Calu3 (cell line): ENCODE measurements at regions of chr7 and their contacts with region 1.

Region 1: GRCh38 chr7:118918556-118918955 is 694.1 kb downstream of the ANKRD7 start:
- DNase-seq: no peak
- H3K4me3 Mint-ChIP-seq: no peak overlapping the region
- H3K27ac Mint-ChIP-seq: no peak overlapping the region
- H3K4me1 Mint-ChIP-seq: no peaks in the 10 kb centered on the region
- H3K27me3 Mint-ChIP-seq: no peaks in the 10 kb centered on the region
- CTCF ChIP-seq: peak; percentile 26

Region 2: DNA sequence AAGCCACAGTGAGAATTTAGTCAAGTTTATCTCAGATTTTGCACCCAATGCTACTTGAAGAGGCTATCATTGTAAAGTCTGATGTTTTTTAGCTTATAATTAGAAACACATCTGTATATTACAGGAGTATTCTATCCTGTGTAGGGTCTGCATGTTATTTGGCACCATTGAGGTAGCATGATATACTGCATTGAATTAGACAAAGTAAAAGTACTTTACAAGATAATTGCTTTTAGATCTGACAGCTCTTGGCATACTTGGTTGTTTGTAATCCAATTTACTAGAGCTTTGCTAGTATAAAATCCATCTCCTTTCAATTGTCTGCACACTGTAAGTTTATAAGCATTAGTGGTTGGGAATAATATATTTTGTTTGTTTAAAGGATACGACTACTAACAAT is 20.3 kb after region 1 on chr7:
- CTCF ChIA-PET with region 1: no interaction called
- intact Hi-C with region 1: no loop called
- DNase-seq: no peak
- H3K4me3 Mint-ChIP-seq: no peak overlapping the region
- H3K27ac Mint-ChIP-seq: no peak overlapping the region
- H3K4me1 Mint-ChIP-seq: no peaks in the 10 kb centered on the region
- H3K27me3 Mint-ChIP-seq: no peaks in the 10 kb centered on the region
- CTCF ChIP-seq: no peak

Region 3: GRCh38 chr7:119197877-119198527 is 279.4 kb after region 1 on chr7:
- CTCF ChIA-PET with region 1: no interaction called
- intact Hi-C with region 1: loop called (anchors 1 kb)
- DNase-seq: peak; percentile 41
- H3K4me3 Mint-ChIP-seq: no peak overlapping the region
- H3K27ac Mint-ChIP-seq: no peak overlapping the region
- H3K4me1 Mint-ChIP-seq: no peaks in the 10 kb centered on the region
- H3K27me3 Mint-ChIP-seq: no peaks in the 10 kb centered on the region
- CTCF ChIP-seq: peak; percentile 86